ENCODE measurements at regions of chr2 and their contacts with region 1.

Region 1: DNA sequence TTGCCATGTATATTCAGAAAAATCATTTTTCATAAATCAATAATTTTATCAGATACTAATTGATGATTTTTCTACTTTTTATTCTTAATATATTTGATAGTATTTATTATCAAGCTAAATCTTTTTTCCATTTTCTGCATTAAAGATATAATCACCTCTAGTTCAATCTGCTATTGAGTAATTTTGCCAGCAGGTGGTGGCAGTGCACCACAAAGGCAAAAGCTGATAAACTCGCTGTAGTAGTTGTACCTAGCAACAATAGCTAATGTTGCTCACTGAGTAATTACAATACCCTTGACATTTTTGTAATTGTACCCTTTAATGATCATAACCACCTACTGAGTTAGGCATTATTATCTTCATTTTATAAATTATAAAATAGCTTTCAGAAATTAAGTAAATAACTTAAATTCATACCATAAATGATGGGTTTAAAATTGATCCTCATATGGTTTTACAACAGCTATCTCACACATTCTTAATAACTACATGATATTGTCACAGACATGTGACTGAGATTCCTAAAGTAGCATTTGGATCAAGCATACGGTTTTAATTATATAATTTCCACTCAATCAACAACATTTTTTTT is 52.0 kb upstream of the CALCRL start:
- DNase-seq: peak; percentile 57
- H3K4me3 ChIP-seq: no peak overlapping the region
- H3K27ac ChIP-seq: no peak overlapping the region
- H3K4me1 ChIP-seq: peaks cover 0 to 33% (median 5%) of the 10 kb centered on the region in 4 donors
- H3K27me3 ChIP-seq: no peaks in the 10 kb centered on the region
- CTCF ChIP-seq: peak; percentile 79 to 84 (median 82)
- EP300 ChIP-seq: no peak
- POLR2A ChIP-seq: no peak

Region 2: DNA sequence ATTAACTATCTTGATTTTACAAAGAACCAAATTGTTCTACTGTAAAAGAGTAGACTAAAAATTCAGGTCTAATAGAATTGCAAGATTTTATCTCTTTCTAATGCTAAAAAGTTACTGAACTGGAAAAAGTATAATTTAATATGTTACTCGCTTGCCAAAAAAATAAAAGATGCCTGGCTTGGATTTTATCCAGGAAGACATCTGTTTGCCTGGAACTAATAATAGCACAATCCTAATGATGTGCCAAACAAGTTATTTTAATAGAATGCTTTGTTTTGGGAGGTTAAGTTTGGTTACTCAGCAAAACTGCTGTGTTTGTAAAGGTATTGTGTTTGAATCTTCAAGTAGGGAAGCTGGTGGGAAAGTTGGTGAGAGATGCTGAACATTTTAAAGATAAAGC is 631.7 kb before region 1 on chr2:
- in situ Hi-C with region 1: no loop called
- intact Hi-C with region 1: no loop called
- DNase-seq: no peak
- H3K4me3 ChIP-seq: no peak overlapping the region
- H3K27ac ChIP-seq: no peak overlapping the region
- H3K4me1 ChIP-seq: no peaks in the 10 kb centered on the region
- H3K27me3 ChIP-seq: no peaks in the 10 kb centered on the region
- CTCF ChIP-seq: no peak
- EP300 ChIP-seq: no peak
- POLR2A ChIP-seq: no peak

Region 3: GRCh38 chr2:187574969-187575750 is 75.1 kb after region 1 on chr2:
- in situ Hi-C with region 1: loop called in 2 of 4 experiments (anchors 10 kb)
- intact Hi-C with region 1: loop called (anchors 2 kb)
- DNase-seq: no peak
- H3K4me3 ChIP-seq: no peak overlapping the region
- H3K27ac ChIP-seq: peak overlapping the region in 2 of 4 donors; percentile 22 to 26
- H3K4me1 ChIP-seq: peaks cover 0 to 13% (median 4%) of the 10 kb centered on the region in 4 donors
- H3K27me3 ChIP-seq: no peaks in the 10 kb centered on the region
- CTCF ChIP-seq: no peak
- EP300 ChIP-seq: no peak
- POLR2A ChIP-seq: no peak

Region 4: GRCh38 chr2:187581125-187581896 is 81.3 kb after region 1 on chr2:
- in situ Hi-C with region 1: loop called in 2 of 4 experiments (anchors 10 kb)
- intact Hi-C with region 1: loop called (anchors 2 kb)
- DNase-seq: no peak
- H3K4me3 ChIP-seq: peak overlapping the region in 1 of 4 donors; percentile 27
- H3K27ac ChIP-seq: no peak overlapping the region
- H3K4me1 ChIP-seq: peaks cover 0 to 15% (median 4%) of the 10 kb centered on the region in 4 donors
- H3K27me3 ChIP-seq: no peaks in the 10 kb centered on the region
- CTCF ChIP-seq: peak; percentile 60 to 73 (median 66)
- EP300 ChIP-seq: no peak
- POLR2A ChIP-seq: no peak

Region 5: GRCh38 chr2:187842978-187843847 is 343.2 kb after region 1 on chr2:
- in situ Hi-C with region 1: loop called in 2 of 4 experiments (anchors 25 kb)
- intact Hi-C with region 1: no loop called
- DNase-seq: no peak
- H3K4me3 ChIP-seq: no peak overlapping the region
- H3K27ac ChIP-seq: no peak overlapping the region
- H3K4me1 ChIP-seq: no peaks in the 10 kb centered on the region
- H3K27me3 ChIP-seq: no peaks in the 10 kb centered on the region
- CTCF ChIP-seq: peak; percentile 26 to 50 (median 48)
- EP300 ChIP-seq: no peak
- POLR2A ChIP-seq: no peak

Measured in transverse colon (tissue), 4 donors.